Right cardiac atrium (tissue), 5 donors: ENCODE measurements at regions of chr4 and their contacts with region 1.

Region 1: GRCh38 chr4:7067452-7068278 is at the start of gene GRPEL1:
- DNase-seq: peak; percentile 100
- ATAC-seq: peak; percentile 97
- H3K4me3 ChIP-seq: peak within 1 kb of the TSS; percentile 80
- H3K27ac ChIP-seq: peak within 1 kb of the TSS; percentile 94
- H3K4me1 ChIP-seq: peaks cover 5% of the 10 kb centered on the region
- H3K27me3 ChIP-seq: no peaks in the 10 kb centered on the region
- total RNA-seq, gene GRPEL1: 28.2 to 36.8 (median 32.5) TPM

Region 2: DNA sequence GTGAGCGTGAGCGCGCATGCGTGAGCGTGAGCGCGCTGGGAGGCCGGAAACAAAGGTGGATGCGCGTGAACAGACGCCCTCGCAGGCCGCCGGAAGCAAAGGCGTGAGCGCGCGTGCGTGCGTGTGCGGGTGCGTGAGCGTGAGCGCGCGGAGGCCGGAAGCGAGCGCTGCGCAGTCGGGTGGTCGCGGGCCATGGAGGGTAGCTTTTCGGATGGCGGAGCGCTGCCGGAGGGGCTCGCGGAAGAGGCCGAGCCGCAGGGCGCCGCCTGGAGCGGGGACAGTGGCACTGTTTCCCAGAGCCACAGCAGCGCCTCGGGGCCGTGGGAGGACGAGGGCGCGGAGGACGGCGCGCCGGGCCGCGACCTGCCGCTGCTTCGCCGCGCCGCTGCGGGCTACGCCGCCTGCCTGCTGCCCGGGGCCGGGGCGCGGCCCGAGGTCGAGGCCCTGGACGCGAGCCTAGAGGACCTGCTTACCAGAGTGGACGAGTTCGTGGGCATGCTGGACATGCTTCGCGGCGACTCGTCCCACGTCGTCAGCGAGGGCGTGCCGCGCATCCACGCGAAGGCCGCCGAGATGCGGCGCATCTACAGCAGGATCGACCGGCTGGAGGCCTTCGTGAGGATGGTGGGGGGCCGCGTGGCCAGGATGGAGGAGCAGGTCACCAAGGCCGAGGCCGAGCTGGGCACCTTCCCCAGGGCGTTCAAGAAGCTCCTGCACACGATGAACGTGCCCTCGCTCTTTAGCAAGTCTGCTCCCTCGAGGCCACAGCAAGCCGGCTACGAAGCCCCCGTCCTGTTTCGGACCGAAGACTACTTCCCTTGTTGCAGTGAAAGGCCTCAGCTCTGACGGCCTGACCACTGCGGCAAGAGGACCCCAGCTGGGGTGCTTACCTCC is 351.4 kb before region 1 on chr4 and contains the start of gene BLOC1S4:
- intact Hi-C with region 1: loop called (anchors 2 to 10 kb)
- DNase-seq: peak; percentile 91 to 97 (median 95)
- ATAC-seq: peak; percentile 92 to 94
- H3K4me3 ChIP-seq: peak within 1 kb of the TSS; percentile 41
- H3K27ac ChIP-seq: peak within 1 kb of the TSS; percentile 74
- H3K4me1 ChIP-seq: no peaks in the 10 kb centered on the region
- H3K27me3 ChIP-seq: no peaks in the 10 kb centered on the region
- total RNA-seq, gene BLOC1S4: 7.5 to 9.1 (median 8.4) TPM

Region 3: DNA sequence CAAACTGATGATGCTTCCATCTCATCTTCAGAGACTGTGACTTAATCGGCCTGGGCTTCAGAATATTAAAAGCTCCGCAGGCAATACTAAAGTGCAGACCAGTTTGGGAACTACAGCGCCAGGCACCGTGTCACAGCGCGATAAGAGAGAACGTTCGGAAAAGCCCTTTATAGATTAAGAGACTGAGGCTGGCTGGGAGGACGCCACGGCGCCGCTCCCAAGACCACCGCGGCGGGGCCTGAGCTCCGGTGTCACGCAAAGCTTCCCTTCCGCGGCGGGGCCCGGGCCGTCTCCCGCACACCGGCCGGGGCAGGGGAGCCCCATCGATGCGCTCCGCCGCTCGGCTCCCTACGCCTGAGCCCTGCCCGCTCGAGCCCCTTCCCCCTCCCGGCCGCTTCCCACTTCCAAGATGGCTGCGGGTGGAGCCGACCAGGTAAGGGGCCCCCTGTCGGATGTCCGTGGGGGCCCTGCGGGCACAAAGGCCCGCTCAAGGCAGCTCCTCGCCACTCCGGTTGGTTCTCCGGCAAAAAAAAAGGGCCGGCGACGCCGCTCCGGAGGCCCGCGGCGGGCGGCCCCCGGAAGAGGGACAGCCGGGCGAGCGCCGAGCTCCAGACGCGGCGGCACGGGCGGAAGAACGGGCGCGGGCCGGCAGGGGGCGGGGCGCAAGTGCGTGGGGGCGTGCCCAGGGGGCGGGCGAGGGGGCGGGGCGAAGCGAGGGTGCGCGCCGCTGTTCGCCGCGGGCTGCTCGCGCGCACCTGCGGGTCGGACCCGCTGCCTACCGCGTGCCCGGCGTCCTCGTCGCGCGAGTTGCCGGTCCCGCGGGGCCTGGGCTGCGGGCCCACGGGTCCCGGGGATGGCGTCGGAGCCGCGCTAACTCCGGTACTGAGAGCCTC is 158.3 kb before region 1 on chr4 and contains the start of gene TBC1D14:
- intact Hi-C with region 1: loop called in 2 of 4 experiments (anchors 5 to 10 kb)
- DNase-seq: peak; percentile 89 to 95 (median 95)
- ATAC-seq: peak; percentile 96
- H3K4me3 ChIP-seq: peak within 1 kb of the TSS; percentile 73
- H3K27ac ChIP-seq: peak within 1 kb of the TSS; percentile 90
- H3K4me1 ChIP-seq: peaks cover 10% of the 10 kb centered on the region
- H3K27me3 ChIP-seq: no peaks in the 10 kb centered on the region
- total RNA-seq, gene TBC1D14: 36.2 to 44.8 (median 42.5) TPM

Region 4: GRCh38 chr4:6926681-6927478 is 140.8 kb before region 1 on chr4:
- intact Hi-C with region 1: no loop called
- DNase-seq: peak in 2 of 3 donors; percentile 73 to 80
- ATAC-seq: peak; percentile 51 to 55
- H3K4me3 ChIP-seq: no peak overlapping the region
- H3K27ac ChIP-seq: no peak overlapping the region
- H3K4me1 ChIP-seq: peaks cover 12% of the 10 kb centered on the region
- H3K27me3 ChIP-seq: no peaks in the 10 kb centered on the region

Region 5: DNA sequence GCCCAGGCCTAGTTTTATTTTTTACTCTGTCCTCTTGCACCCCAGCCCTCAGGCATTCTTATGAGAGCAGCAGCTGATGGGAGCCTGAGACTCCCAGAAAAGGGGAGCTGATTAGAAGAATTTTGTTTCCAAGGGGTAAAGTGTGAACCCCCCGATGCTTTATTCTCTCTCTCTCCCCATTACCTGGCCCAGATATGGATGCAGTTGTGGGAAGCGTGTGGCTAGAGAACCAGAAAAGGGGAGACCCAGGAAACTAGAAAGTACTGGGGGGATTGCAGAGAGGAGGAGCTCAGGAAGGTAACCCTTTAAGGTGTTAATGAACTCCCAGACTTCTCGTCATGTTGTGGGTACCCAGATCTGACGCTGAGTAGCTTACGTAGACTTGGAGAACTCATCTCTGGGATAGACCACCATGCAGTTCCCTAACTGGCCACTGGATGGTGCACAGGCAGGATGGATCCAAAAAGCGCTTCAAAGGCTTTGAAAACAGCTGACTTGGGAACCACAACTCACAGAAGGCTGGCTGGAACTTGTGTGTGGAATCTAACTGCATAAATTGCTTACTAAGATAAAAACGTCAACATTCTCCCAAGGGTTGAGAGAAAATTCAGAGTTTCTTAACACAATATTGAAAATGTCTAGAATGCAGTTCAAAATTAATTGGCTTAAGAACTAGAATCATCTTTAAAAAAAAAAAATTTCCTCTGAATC is 93.4 kb before region 1 on chr4:
- intact Hi-C with region 1: loop called in 2 of 4 experiments (anchors 2 to 10 kb)
- DNase-seq: peak; percentile 81 to 92 (median 88)
- ATAC-seq: peak; percentile 94
- H3K4me3 ChIP-seq: no peak overlapping the region
- H3K27ac ChIP-seq: no peak overlapping the region
- H3K4me1 ChIP-seq: no peaks in the 10 kb centered on the region
- H3K27me3 ChIP-seq: no peaks in the 10 kb centered on the region

Region 6: GRCh38 chr4:6986781-6987587 is 80.7 kb before region 1 on chr4:
- intact Hi-C with region 1: loop called in 1 of 4 experiments (anchors 10 kb)
- DNase-seq: peak; percentile 95 to 98 (median 98)
- ATAC-seq: peak; percentile 95 to 96
- H3K4me3 ChIP-seq: peak overlapping the region; percentile 73
- H3K27ac ChIP-seq: peak overlapping the region; percentile 83
- H3K4me1 ChIP-seq: peaks cover 9% of the 10 kb centered on the region
- H3K27me3 ChIP-seq: no peaks in the 10 kb centered on the region

Region 7: DNA sequence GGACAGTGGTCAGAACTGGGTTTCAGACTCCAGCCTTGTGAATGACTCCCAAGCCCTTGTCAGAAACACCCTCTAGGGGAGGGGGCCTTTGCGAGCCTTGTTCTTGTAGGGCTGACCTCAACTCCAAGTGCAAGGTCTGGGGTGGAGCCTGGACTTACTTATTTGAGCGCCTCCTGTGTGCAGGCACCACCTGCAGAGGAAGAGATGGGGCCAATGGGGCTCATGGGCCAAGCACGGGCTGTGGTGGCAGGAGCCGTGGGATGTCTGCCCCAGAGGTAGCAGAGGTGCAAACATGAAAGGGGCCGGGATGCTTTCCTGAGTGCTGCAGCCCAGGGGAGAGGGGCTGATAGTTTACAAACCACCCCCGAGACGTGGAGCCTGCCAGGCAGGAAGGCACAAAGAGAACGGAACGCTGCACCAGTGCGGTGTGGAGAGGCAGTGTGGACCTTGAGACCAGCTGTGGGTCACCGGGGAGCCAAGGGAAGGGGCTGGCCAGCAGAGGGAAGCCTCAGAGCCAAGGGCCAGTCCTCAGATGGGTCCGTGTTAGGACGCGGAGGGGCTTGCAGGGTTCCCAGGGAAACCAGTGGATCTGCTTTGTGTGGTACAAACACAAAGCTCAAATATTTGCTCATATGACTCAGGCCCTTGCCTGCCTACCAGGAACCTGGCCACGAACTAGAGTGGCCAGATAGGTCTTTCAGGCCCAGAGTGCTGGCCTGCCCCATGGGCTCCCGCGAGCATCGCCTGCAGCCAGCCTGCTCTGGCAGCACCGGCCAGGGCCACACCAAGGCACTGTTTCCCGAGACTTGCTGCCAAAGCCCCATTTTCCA is 33.2 kb before region 1 on chr4:
- intact Hi-C with region 1: loop called in 1 of 4 experiments (anchors 5 kb)
- DNase-seq: no peak
- ATAC-seq: peak; percentile 38 to 45
- H3K4me3 ChIP-seq: no peak overlapping the region
- H3K27ac ChIP-seq: no peak overlapping the region
- H3K4me1 ChIP-seq: no peaks in the 10 kb centered on the region
- H3K27me3 ChIP-seq: no peaks in the 10 kb centered on the region